Lower leg skin (tissue), 4 donors: ENCODE measurements at regions of chr4 and their contacts with region 1.

Region 1: DNA sequence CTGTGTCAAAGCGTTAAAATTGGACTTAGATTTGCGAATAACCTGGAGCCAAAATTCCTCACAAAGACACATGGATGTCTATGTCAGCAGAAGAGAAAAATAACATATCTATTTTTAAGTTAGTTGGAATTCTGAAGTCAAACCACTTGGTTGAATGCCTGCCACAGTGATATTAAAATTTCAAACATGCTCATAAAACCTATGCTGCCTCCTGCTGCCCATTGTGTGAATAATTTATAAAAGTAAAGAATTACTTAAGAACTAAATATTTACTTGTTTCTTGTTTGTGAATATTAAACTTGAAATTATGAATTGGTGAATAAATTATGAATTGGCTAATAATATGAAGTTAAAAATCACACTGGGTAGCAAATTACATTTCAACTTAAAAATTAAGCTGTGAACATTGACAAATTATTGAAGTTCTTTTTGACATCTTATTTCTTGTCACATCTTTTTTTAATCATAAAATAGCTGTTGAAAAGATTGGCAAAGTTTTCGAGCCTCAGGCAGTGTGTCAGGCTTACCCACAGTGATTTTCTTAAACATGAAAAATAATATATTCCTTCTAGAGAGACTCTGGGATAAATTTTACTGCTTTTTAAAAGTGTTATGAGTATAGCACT is 35.4 kb downstream of the FABP2 start:
- DNase-seq: no peak
- H3K4me3 ChIP-seq: no peak overlapping the region
- CTCF ChIP-seq: no peak
- POLR2A ChIP-seq: no peak

Region 2: GRCh38 chr4:118981839-118982381 is 304.6 kb before region 1 on chr4:
- intact Hi-C with region 1: loop called (anchors 5 kb)
- DNase-seq: peak in 1 of 2 donors; percentile 61
- H3K4me3 ChIP-seq: no peak overlapping the region
- CTCF ChIP-seq: no peak
- POLR2A ChIP-seq: no peak

Region 3: GRCh38 chr4:119046263-119046662 is 240.2 kb before region 1 on chr4:
- intact Hi-C with region 1: loop called (anchors 5 kb)
- DNase-seq: no peak
- H3K4me3 ChIP-seq: no peak overlapping the region
- CTCF ChIP-seq: no peak
- POLR2A ChIP-seq: no peak

Region 4: GRCh38 chr4:119189638-119190037 is 96.9 kb before region 1 on chr4:
- intact Hi-C with region 1: no loop called
- DNase-seq: no peak
- H3K4me3 ChIP-seq: no peak overlapping the region
- CTCF ChIP-seq: no peak
- POLR2A ChIP-seq: no peak